A673 (cell line): ENCODE measurements at regions of chr15 and their contacts with region 1.

Region 1: GRCh38 chr15:47924381-47924780 is 196.4 kb upstream of the SLC24A5 start:
- DNase-seq: peak; percentile 94
- H3K4me3 ChIP-seq: peak overlapping the region; percentile 33
- H3K27ac ChIP-seq: peak overlapping the region; percentile 72
- H3K4me1 ChIP-seq: peaks cover 34% of the 10 kb centered on the region
- H3K27me3 ChIP-seq: no peaks in the 10 kb centered on the region
- CTCF ChIP-seq: no peak

Region 2: GRCh38 chr15:47415539-47415971 is 508.8 kb before region 1 on chr15:
- CTCF ChIA-PET with region 1: no interaction called
- POLR2A ChIA-PET with region 1: no interaction called
- intact Hi-C with region 1: no loop called
- DNase-seq: peak; percentile 91
- H3K4me3 ChIP-seq: peak overlapping the region; percentile 3
- H3K27ac ChIP-seq: peak overlapping the region; percentile 89
- H3K4me1 ChIP-seq: peaks cover 66% of the 10 kb centered on the region
- H3K27me3 ChIP-seq: no peaks in the 10 kb centered on the region
- CTCF ChIP-seq: no peak

Region 3: GRCh38 chr15:47950447-47950846 is 26.1 kb after region 1 on chr15:
- CTCF ChIA-PET with region 1: interaction called, 11 read pairs
- POLR2A ChIA-PET with region 1: no interaction called
- intact Hi-C with region 1: loop called (anchors 1 kb)
- DNase-seq: no peak
- H3K4me3 ChIP-seq: no peak overlapping the region
- H3K27ac ChIP-seq: no peak overlapping the region
- H3K4me1 ChIP-seq: peaks cover 80% of the 10 kb centered on the region
- H3K27me3 ChIP-seq: no peaks in the 10 kb centered on the region
- CTCF ChIP-seq: no peak